Caco-2 (cell line): ENCODE measurements at regions of chr13 and their contacts with region 1.

Region 1: GRCh38 chr13:27362064-27362883 is 62.1 kb upstream of the GTF3A start:
- DNase-seq: peak; percentile 87 to 93
- H3K4me3 ChIP-seq: peak overlapping the region; percentile 44
- H3K4me3 Mint-ChIP-seq: peak overlapping the region; percentile 71
- H3K27ac Mint-ChIP-seq: peak overlapping the region; percentile 28
- H3K4me1 ChIP-seq: peaks cover 4% of the 10 kb centered on the region; the same call in 1 of the 2 replicates
- H3K4me1 Mint-ChIP-seq: peaks cover 18% of the 10 kb centered on the region
- H3K27me3 ChIP-seq: no peaks in the 10 kb centered on the region; the same call in 1 of the 2 replicates
- H3K27me3 Mint-ChIP-seq: no peaks in the 10 kb centered on the region
- CTCF ChIP-seq: peak; percentile 94 to 98

Region 2: DNA sequence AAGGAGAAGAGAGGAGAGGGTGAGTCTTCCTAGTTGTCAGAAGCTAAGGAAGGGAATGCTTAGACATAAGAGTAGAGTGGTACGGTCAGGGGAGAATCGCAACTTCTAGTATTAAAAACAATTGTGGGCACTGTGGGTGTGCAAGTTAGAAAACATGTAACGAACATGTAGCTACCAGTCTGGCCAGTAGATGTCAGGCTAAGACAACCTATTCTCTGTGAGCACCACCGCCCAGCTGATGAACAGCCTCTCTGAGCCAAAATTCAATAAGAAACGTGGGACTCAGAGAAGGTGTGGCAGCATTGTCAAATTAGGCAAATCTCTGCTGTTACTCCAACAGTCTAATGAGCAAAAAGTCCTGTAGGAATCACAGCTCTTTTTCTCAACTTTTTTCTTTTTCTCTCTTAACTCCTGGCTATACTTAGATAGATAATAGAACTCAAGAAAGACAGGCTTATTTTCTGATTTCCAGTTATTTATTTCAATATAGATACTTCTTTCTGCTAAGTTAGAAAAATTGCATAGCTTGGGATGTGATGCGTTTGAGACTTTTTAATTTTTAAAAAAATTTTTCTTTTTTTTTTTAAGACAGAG is 376.9 kb before region 1 on chr13:
- CTCF ChIA-PET with region 1: interaction called, 38 read pairs
- POLR2A ChIA-PET with region 1: interaction called, 3 read pairs
- intact Hi-C with region 1: loop called (anchors 1 kb)
- DNase-seq: peak; percentile 80 to 83
- H3K4me3 ChIP-seq: no peak overlapping the region
- H3K4me3 Mint-ChIP-seq: no peak overlapping the region
- H3K27ac Mint-ChIP-seq: peak overlapping the region; percentile 30
- H3K4me1 ChIP-seq: peaks cover 49% of the 10 kb centered on the region
- H3K4me1 Mint-ChIP-seq: peaks cover 62% of the 10 kb centered on the region
- H3K27me3 ChIP-seq: no peaks in the 10 kb centered on the region
- H3K27me3 Mint-ChIP-seq: no peaks in the 10 kb centered on the region
- CTCF ChIP-seq: peak; percentile 65 to 92

Region 3: DNA sequence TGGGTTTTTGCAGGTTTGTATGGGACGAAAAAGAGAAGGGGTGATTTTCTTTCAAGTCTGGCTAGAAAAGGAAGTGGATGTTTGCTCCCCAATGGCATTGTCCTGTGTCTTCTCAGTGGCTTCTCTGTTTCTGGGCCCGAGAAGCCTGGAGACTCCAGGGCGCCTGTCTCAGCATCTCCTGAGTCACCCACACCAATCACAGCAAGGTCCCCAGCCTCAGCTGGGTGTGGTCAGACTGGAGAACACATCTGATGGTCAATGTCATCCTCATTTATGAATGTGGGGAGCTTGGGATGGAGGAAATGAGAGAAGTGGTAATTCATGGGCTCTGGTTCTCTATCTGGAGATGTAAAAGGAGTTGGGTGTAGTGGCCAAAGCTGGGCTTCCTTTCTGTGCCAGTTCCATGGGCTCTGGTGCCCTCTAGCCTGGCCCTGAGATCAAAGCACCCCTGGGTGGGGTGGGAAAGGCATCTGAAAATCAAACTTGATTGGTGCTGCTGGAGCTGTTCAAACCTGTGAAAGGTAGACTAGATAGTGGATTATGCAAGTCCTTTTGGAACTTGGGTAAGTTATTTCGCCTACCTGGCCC is 78.3 kb before region 1 on chr13:
- CTCF ChIA-PET with region 1: interaction called, 4 read pairs
- POLR2A ChIA-PET with region 1: no interaction called
- intact Hi-C with region 1: loop called (anchors 2 kb)
- DNase-seq: peak in 1 of 2 experiments; percentile 23
- H3K4me3 ChIP-seq: no peak overlapping the region
- H3K4me3 Mint-ChIP-seq: no peak overlapping the region
- H3K27ac Mint-ChIP-seq: no peak overlapping the region
- H3K4me1 ChIP-seq: no peaks in the 10 kb centered on the region
- H3K4me1 Mint-ChIP-seq: no peaks in the 10 kb centered on the region
- H3K27me3 ChIP-seq: no peaks in the 10 kb centered on the region
- H3K27me3 Mint-ChIP-seq: no peaks in the 10 kb centered on the region
- CTCF ChIP-seq: no peak

Region 4: DNA sequence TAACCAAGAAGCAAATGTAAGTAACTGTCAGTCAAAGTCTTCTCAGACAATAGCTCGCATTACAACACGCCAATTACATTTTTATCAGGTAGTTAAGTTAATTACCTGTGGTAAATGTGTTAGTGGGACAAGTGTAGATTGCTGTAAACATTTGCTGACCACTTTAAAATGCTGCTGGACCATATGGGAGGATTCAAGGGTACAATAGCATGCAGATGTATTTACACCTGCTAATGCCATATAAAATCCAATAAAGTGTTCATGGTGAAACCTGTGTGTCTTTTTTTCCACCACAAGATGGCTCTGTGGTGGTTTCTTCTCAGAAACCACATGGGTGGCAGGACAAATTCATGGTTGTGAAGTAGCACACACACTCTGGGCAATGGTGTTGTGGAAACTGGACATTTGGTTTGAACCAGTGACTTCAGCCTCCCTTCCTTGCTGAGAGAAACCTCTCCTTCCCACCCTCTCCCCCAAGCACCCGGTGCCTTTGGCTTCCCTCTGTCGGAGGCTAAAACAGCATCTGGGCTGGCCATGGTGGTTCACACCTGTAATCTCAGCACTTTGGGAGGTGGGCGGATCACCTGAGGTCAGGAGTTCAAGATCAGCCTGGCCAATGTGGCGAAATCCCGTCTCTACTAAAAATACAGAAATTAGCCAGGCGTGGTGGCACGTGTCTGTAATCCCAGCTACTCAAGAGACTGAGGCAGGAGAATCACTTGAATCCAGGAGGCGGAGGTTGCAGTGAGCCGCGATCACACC is 44.1 kb after region 1 on chr13:
- CTCF ChIA-PET with region 1: interaction called, 13 read pairs
- POLR2A ChIA-PET with region 1: no interaction called
- intact Hi-C with region 1: no loop called
- DNase-seq: peak in 1 of 2 experiments; percentile 57
- H3K4me3 ChIP-seq: no peak overlapping the region
- H3K4me3 Mint-ChIP-seq: no peak overlapping the region
- H3K27ac Mint-ChIP-seq: no peak overlapping the region
- H3K4me1 ChIP-seq: peaks cover 43% of the 10 kb centered on the region
- H3K4me1 Mint-ChIP-seq: peaks cover 32% of the 10 kb centered on the region
- H3K27me3 ChIP-seq: no peaks in the 10 kb centered on the region
- H3K27me3 Mint-ChIP-seq: no peaks in the 10 kb centered on the region
- CTCF ChIP-seq: peak; percentile 62 to 65

Region 5: DNA sequence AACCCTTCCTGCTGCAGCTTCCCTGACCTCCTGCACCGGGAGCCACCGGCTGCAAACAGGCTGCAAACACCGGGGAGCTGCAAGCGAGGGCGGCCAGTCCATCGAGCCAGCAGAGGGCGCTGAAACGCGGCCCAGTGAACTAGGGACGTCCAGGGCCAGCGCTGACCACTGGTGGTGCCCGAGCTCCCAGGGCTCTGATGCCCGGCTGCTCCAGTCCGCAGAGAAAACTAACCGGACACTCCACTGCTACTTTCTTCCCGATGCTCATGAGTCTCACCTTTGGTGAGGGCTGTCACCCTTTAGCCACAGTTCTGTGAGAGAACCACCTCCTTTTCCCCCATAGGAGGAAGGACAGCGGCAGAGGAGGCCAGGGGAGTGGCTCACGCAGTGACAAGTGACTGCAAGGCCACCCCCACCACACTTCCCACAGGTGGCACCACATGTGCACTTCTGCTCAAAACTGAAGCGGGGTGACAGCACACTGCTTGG is 170.9 kb after region 1 on chr13:
- CTCF ChIA-PET with region 1: interaction called, 13 read pairs
- POLR2A ChIA-PET with region 1: no interaction called
- intact Hi-C with region 1: no loop called
- DNase-seq: peak; percentile 72 to 87
- H3K4me3 ChIP-seq: no peak overlapping the region
- H3K4me3 Mint-ChIP-seq: no peak overlapping the region
- H3K27ac Mint-ChIP-seq: no peak overlapping the region
- H3K4me1 ChIP-seq: peaks cover 9% of the 10 kb centered on the region
- H3K4me1 Mint-ChIP-seq: peaks cover 11% of the 10 kb centered on the region
- H3K27me3 ChIP-seq: no peaks in the 10 kb centered on the region
- H3K27me3 Mint-ChIP-seq: no peaks in the 10 kb centered on the region
- CTCF ChIP-seq: peak; percentile 89 to 98